ENCODE measurements at regions of chr5 and their contacts with region 1.

Region 1: GRCh38 chr5:181260387-181261319 is at the start of gene TRIM52:
- DNase-seq: peak; percentile 94
- H3K4me3 ChIP-seq: peak within 1 kb of the TSS; percentile 95
- H3K27ac ChIP-seq: peak within 1 kb of the TSS; percentile 100
- H3K4me1 ChIP-seq: no peaks in the 10 kb centered on the region
- H3K27me3 ChIP-seq: no peaks in the 10 kb centered on the region
- CTCF ChIP-seq: no peak
- total RNA-seq, gene TRIM52: 9.8 to 13.5 TPM

Region 2: GRCh38 chr5:181181650-181182565 is 78.7 kb before region 1 on chr5:
- intact Hi-C with region 1: loop called (anchors 10 kb)
- DNase-seq: peak; percentile 77
- H3K4me3 ChIP-seq: no peak overlapping the region
- H3K27ac ChIP-seq: no peak overlapping the region
- H3K4me1 ChIP-seq: peaks cover 6% of the 10 kb centered on the region
- H3K27me3 ChIP-seq: no peaks in the 10 kb centered on the region
- CTCF ChIP-seq: peak; percentile 86

Measured in colonic mucosa (tissue), 4 donors.